K562 (cell line): ENCODE measurements at regions of chr17 and their contacts with region 1.

Region 1: DNA sequence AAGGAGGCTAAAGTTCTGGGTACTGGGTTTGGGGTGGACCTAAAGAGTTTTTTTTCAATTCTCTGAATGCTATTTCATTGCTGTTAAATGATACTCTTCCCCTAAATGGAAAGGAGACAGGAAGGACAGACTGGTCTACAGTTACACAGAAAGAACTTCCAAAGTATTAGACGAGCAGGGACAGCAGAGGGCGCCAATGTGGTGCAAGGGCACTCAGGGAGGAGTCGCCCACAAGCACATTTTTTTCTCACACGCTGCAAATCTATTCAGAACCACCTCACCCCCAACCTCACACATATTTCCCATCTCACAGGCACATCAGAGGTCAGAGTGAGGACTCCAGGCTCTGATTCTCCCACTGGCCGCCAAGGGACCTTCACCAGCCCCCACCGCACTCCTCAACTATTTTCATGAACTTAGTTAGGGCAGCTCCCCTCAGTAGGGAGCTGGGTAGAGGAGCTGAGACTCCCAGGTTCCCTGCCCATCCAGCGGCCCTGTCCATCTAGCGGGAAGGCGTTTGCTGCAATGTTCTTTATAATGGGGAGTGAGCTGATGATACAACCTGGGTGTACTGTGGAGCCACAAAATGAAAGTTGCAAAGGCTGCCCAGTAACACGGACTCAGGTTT is 6.8 kb upstream of the CA4 start:
- DNase-seq: peak; percentile 67 to 88 (median 70)
- ATAC-seq: peak; percentile 91
- H3K4me3 ChIP-seq: no peak overlapping the region
- H3K27ac ChIP-seq: no peak overlapping the region
- H3K4me1 ChIP-seq: peaks cover 4 to 34% of the 10 kb centered on the region in 2 experiments; a peak in 4 of 5 replicates
- H3K27me3 ChIP-seq: peaks cover 27 to 63% of the 10 kb centered on the region in 2 experiments; a peak in 4 of 5 replicates
- CTCF ChIP-seq: peak; percentile 86 to 92 (median 91)
- EP300 ChIP-seq: no peak
- POLR2A ChIP-seq: no peak
- RAD21 ChIP-seq: peak; percentile 80 to 92

Region 2: GRCh38 chr17:60231234-60231633 is 88.2 kb after region 1 on chr17:
- CTCF ChIA-PET with region 1: interaction called, 3 read pairs
- POLR2A ChIA-PET with region 1: no interaction called
- in situ Hi-C with region 1: no loop called
- intact Hi-C with region 1: loop called (anchors 1 kb)
- DNase-seq: peak in 2 of 4 experiments; percentile 11 to 22
- ATAC-seq: peak; percentile 77
- H3K4me3 ChIP-seq: no peak overlapping the region
- H3K27ac ChIP-seq: no peak overlapping the region
- H3K4me1 ChIP-seq: no peaks in the 10 kb centered on the region; a peak in 1 of 5 replicates
- H3K27me3 ChIP-seq: no peaks in the 10 kb centered on the region
- CTCF ChIP-seq: peak in 2 of 3 experiments; percentile 46 to 60; a peak in 4 of 6 replicates
- EP300 ChIP-seq: no peak
- POLR2A ChIP-seq: no peak
- RAD21 ChIP-seq: peak; percentile 19 to 61; a peak in 3 of 4 replicates

Region 3: DNA sequence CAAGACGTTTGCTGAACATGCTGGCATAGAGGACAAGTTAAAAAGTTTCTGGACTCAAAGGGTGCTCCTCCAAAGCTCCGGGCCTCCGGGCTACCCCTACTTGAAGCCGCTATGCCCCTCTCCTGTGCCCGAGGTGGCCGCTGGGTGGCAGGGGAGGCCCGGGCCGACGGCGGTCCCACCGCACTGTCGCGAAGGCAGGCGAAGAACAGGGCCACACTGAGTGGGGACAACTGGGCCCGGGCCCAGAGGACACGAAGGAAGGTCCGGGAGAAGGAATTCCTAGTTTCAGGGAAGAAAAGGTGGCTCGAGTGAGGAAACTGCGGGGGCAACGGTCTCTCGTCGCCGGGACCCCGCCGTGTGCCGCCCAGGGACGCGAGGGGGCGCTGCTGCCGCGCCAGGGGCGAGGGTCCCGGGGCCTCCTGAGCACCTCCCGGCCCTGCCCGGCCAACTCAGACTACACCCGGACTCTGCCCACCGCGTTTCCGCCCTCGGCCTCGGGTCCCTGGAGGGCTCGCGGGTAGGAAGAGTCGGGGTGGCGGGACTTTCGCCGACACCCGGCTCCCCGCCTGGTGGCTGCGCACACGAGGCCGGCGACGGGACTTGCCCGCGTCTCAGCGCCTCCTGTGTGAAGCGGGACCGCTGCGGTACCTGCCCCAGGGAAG is 278.4 kb after region 1 on chr17:
- CTCF ChIA-PET with region 1: no interaction called
- POLR2A ChIA-PET with region 1: no interaction called
- in situ Hi-C with region 1: loop called (anchors 10 kb)
- intact Hi-C with region 1: no loop called
- DNase-seq: no peak
- ATAC-seq: no peak
- H3K4me3 ChIP-seq: no peak overlapping the region
- H3K27ac ChIP-seq: no peak overlapping the region
- H3K4me1 ChIP-seq: peaks cover 0 to 13% of the 10 kb centered on the region in 2 experiments; a peak in 2 of 5 replicates
- H3K27me3 ChIP-seq: peaks cover 3 to 9% of the 10 kb centered on the region in 2 experiments; a peak in 3 of 5 replicates
- CTCF ChIP-seq: no peak
- EP300 ChIP-seq: no peak
- POLR2A ChIP-seq: no peak
- RAD21 ChIP-seq: no peak

Region 4: DNA sequence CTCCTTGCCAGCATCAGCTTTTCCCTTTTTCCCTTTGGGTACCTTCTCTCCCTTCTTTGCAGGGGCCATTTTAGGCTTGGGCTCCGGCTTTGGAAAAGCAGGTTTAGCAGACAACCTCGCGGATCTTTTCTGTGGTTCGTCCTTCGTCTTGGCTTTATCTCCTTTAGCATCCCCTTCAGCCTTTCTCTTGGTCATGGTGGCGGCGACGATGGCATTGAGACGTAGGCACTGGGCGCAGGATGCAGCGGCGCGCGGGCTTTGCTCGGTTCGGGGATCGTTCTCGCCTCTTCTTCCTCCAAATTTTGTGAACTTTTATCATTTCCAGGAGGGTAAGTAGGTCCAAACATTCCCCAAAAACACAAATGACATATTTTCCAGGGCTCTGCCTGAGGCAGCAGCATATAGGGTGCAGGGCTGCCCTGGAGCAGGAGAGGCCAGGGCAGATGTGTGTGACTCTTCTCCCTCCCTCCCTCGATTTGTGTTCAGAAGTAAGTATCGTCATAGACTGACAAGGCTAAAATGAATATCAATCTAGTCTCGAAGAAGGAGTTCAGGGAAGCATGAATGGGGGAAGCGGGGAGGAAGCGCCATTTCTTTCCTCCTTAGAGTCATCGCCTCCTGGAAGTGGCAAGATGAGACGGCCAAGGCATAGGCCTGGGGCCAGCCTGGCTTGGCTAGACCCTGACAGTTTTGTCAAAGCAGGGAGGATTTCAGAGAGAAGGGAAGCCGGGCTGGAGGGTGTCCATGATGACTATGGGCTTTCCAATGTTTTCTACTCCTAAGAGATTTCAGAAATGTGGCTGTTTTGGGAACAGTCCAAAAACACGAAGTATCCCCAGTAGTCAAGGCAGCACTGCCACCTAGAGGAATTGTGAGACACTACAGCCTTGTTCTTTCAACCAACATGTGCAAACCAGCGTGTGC is 292.5 kb after region 1 on chr17:
- CTCF ChIA-PET with region 1: interaction called, 14 read pairs
- POLR2A ChIA-PET with region 1: no interaction called
- in situ Hi-C with region 1: no loop called
- intact Hi-C with region 1: loop called (anchors 1 kb)
- DNase-seq: peak; percentile 65 to 87 (median 71)
- ATAC-seq: peak; percentile 84
- H3K4me3 ChIP-seq: no peak overlapping the region
- H3K27ac ChIP-seq: no peak overlapping the region
- H3K4me1 ChIP-seq: peaks cover 3% of the 10 kb centered on the region in 2 experiments; a peak in 3 of 5 replicates
- H3K27me3 ChIP-seq: no peaks in the 10 kb centered on the region
- CTCF ChIP-seq: peak; percentile 84 to 96 (median 87)
- EP300 ChIP-seq: no peak
- POLR2A ChIP-seq: no peak
- RAD21 ChIP-seq: peak; percentile 95 to 98

Region 5: DNA sequence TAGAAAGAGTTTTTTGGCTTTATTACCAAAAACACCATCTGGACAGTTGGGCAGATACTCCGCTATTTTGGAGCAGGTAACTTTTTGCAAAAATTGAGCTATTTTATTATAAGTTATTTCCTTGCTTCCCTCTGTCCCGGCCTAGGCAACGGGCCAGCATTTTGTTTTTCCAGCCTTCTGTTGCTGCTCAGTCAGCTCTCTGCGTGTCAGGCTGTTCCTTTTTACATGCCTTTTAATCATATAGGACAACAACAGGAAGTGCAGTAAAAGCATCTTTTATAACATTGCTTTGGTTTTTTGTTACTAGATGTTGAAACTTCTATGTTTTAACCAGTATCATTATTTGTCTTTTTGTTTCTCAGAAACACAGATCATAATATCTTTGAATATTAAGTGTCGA is 487.4 kb after region 1 on chr17:
- CTCF ChIA-PET with region 1: no interaction called
- POLR2A ChIA-PET with region 1: no interaction called
- in situ Hi-C with region 1: no loop called
- intact Hi-C with region 1: loop called (anchors 10 kb)
- DNase-seq: no peak
- ATAC-seq: no peak
- H3K4me3 ChIP-seq: no peak overlapping the region
- H3K27ac ChIP-seq: no peak overlapping the region
- H3K4me1 ChIP-seq: no peaks in the 10 kb centered on the region
- H3K27me3 ChIP-seq: no peaks in the 10 kb centered on the region
- CTCF ChIP-seq: no peak
- EP300 ChIP-seq: no peak
- POLR2A ChIP-seq: no peak
- RAD21 ChIP-seq: no peak